Ascending aorta (tissue), 2 donors: ENCODE measurements at regions of chrX and their contacts with region 1.

Region 1: GRCh38 chrX:17374619-17375366 is at the start of gene NHS:
- DNase-seq: peak in 1 of 2 donors; percentile 83
- H3K4me3 ChIP-seq: peak within 1 kb of the TSS; percentile 64 to 76
- H3K27ac ChIP-seq: peak within 1 kb of the TSS; percentile 31 to 72
- H3K4me1 ChIP-seq: no peaks in the 10 kb centered on the region
- H3K27me3 ChIP-seq: no peaks in the 10 kb centered on the region
- CTCF ChIP-seq: peak; percentile 9 to 58 (median 33)
- total RNA-seq, gene NHS: 8.8 TPM

Region 2: GRCh38 chrX:17242470-17242869 is 132.3 kb before region 1 on chrX:
- intact Hi-C with region 1: loop called (anchors 2 kb)
- DNase-seq: peak in 1 of 2 donors; percentile 68
- H3K4me3 ChIP-seq: no peak overlapping the region
- H3K27ac ChIP-seq: no peak overlapping the region
- H3K4me1 ChIP-seq: no peaks in the 10 kb centered on the region
- H3K27me3 ChIP-seq: no peaks in the 10 kb centered on the region
- CTCF ChIP-seq: peak; percentile 57 to 75 (median 70)

Region 3: DNA sequence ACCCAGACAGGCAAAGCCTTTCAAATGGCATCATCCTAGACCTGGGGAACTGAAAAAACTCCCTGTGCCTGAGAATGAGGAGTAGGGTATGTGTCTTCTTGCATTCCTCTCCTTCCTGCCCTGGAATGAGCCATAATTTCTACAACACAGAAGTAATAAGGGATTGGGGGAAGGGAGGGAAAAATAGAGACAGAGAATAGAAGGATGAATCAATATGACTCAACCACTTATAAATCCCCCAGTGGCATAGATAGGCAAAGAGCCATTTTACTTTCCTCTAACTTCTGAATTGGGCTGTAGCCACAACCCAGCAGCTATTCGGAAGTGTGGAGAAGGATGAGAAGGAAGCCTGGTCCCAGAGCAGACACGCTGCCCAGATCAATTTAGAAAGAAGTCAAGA is 100.1 kb after region 1 on chrX:
- intact Hi-C with region 1: loop called (anchors 10 kb)
- DNase-seq: no peak
- H3K4me3 ChIP-seq: no peak overlapping the region
- H3K27ac ChIP-seq: no peak overlapping the region
- H3K4me1 ChIP-seq: peaks cover 0 to 7% of the 10 kb centered on the region in 2 donors
- H3K27me3 ChIP-seq: no peaks in the 10 kb centered on the region
- CTCF ChIP-seq: no peak

Region 4: DNA sequence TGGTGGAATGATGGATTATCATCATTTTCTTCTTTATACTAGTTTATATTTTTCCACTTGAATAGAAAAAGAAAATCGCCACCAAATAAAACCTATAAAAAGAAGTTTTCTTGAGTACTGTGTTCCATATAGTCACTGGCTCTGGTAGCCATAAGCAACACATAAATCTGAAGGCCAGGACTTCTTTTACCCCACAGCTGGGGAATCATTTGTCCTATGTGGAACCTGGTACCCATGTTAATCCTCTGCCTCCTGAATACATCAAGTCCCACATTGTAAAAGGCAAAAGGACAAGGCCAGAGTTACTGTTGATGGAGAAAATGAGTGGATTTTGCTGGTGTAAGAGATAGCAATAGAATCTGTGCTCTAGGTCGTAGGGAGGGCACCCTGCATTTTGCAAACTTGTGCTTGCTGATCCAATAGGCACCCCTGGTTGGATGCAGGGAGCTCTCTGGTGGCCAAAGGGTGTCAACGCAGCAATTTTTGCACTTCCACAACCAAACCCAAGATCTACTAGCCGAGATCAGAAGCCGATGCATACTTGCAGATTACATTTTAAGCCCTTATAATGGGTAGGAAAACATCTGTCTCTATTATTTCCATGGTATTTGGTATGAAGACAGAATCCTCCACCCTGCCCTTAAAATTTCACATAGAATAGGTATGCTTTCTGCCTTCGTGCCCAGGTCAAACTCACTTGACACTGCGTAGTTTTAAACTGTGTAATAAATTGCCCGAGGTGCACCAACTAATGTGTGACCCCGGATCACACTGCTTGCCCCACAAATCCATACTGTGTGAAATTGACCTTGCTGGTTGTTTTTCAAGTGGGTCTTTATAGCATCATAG is 216.3 kb after region 1 on chrX:
- intact Hi-C with region 1: loop called (anchors 1 kb)
- DNase-seq: peak in 1 of 2 donors; percentile 80
- H3K4me3 ChIP-seq: peak overlapping the region; percentile 24 to 32
- H3K27ac ChIP-seq: peak overlapping the region; percentile 76 to 77
- H3K4me1 ChIP-seq: peaks cover 4 to 21% of the 10 kb centered on the region in 2 donors
- H3K27me3 ChIP-seq: no peaks in the 10 kb centered on the region
- CTCF ChIP-seq: peak; percentile 52 to 64 (median 53)

Region 5: DNA sequence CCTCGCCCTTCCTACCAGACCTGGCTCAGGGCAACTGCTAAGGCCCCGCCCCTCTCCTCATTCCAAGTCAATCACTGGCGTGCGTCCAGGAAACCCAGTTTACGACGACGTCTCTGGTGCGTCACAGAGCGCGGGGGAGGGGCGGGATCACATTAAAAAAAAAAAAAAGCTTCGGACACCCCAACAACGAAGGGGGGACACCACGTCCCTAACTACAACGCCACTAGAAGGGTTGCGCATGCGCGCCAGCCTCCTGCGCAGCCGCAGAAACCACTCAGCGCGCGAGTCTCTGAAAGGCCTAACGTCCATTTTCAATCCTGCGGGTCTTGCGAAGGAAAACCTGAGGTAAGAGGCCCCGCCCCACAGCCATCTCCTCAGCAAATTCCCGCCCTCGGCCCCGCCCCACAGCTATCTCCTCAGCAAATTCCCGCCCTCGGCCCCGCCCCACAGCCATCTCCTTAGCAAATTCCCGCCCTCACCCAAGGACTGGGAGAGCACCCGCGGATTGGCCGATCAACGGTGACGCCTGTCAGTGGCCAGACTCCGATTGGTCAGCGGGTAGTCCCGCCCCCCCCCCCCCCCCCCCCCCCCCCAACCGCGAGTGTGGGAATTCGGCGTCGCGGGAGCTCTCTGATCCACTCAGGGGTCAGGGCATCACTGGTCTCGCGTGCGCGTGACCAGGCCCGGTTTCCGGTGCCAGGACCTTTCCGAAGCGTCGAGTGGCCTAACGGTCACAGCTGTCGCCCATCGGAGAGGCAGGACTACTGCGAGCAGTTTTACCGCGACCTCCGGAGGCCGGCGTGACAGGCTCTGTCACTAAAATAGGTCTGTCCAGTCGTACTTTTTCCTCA is 362.3 kb after region 1 on chrX and contains the start of gene SCML1:
- intact Hi-C with region 1: loop called (anchors 10 kb)
- DNase-seq: peak; percentile 88 to 98
- H3K4me3 ChIP-seq: peak within 1 kb of the TSS; percentile 55 to 69
- H3K27ac ChIP-seq: peak within 1 kb of the TSS; percentile 92 to 95
- H3K4me1 ChIP-seq: peaks cover 0 to 3% of the 10 kb centered on the region in 2 donors
- H3K27me3 ChIP-seq: no peaks in the 10 kb centered on the region
- CTCF ChIP-seq: no peak
- total RNA-seq, gene SCML1: 5.7 TPM